Left ventricle myocardium superior (tissue), 1 donor: ENCODE measurements at regions of chr10 and their contacts with region 1.

Region 1: DNA sequence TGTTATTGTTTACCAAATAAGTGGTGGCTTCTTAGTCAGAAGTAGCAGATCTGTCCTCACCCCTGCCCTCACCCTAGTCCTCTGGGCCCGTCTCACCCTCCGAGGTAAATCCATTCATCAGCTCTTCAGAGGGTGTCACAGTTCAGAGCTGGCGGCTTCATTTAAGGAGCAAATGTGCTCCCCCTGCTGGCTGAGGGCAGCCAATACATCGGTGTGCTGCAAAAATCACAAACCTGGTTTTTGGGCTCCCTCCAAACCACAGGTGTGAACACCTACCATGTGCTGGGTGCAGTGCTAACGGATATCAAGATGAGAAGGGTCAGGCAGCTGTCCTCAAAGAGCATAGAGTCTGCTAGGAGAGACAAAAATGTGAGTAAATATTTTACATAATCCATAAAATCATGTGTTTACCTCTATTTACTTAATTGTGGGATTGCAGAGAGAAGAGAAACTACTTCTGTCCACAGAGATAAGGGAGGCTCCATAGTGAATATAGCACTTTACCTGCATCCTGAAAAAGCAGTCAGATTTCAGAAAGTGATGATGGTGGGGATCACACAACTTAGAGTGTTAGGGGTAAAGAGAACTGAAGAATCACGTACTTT is 15.5 kb upstream of the CRTAC1 start:
- DNase-seq: peak; percentile 51
- ATAC-seq: peak; percentile 53

Region 2: DNA sequence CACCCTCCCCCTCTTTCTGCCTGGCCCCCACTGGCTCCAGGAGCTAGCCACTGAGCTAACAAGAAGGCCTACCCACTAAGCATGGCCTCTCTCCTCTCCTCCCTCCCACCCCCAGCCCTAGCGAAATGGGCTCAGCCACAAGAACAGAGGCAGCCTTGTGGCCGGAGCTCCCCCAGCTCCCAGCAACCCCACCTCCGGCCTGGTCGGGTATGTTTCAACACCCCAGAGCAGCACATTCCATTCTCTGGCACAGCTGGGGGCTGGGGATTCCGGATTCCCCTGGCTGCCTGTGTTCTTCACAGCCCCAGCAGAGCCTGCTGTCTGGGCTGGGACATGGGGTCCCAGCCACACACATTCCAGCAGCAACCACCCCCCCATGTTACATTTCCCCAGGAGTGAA is 283.1 kb before region 1 on chr10:
- intact Hi-C with region 1: loop called (anchors 10 kb)
- DNase-seq: peak; percentile 47
- ATAC-seq: peak; percentile 66

Region 3: GRCh38 chr10:97914837-97915211 is 131.1 kb before region 1 on chr10:
- intact Hi-C with region 1: loop called (anchors 5 kb)
- DNase-seq: peak; percentile 85
- ATAC-seq: peak; percentile 88